CD8-positive, alpha-beta T cell (primary cell): ENCODE measurements at regions of chr1 and their contacts with region 1.

Region 1: DNA sequence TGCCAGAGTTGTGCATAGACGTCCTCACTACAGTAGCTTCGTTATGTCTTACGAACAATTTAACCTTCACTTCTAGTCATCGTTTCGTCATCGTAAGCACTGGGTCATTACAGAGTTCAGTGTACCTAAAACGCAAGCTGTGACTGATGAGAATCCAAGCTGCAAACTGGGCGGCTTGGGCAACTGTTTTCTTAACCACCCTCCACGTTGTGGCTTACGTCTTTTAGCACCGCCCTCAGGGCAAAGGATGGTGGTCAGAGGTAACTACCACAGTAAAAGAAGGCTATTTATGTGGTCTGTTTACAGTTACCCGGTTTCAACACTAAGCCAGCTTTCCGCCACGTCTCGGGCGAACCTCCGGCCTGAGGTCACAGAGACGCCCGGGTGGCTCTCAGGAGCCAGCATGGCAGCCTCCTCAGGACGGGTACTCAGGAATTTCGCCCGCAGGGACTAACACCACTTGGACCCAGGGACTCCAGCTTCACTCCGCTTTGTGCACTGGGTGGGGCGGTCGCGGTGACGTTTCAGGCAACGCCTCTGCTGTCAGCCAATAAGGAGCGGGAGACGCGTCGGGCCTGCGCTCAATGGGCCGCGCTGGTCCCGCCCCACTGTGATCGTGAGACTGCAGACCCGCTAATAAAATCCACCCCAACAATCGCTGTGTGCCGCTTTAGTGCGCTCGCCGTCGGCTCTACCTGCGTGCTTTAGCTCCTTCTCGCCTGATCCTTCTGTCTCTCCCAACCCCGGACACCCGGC is at the start of gene CTH:
- DNase-seq: peak; percentile 82 to 97 (median 91)
- ATAC-seq: peak; percentile 90
- H3K4me3 ChIP-seq: peak within 1 kb of the TSS; percentile 69 to 70
- H3K4me3 Mint-ChIP-seq: peak within 1 kb of the TSS; percentile 92
- H3K27ac ChIP-seq: peak within 1 kb of the TSS; percentile 87 to 88
- H3K27ac Mint-ChIP-seq: peak within 1 kb of the TSS; percentile 95
- H3K4me1 ChIP-seq: peaks cover 14% of the 10 kb centered on the region
- H3K4me1 Mint-ChIP-seq: peaks cover 30% of the 10 kb centered on the region
- H3K27me3 ChIP-seq: no peaks in the 10 kb centered on the region
- H3K27me3 Mint-ChIP-seq: peaks cover 5% of the 10 kb centered on the region
- CTCF ChIP-seq: no peak
- total RNA-seq, gene CTH: 15.5 to 19.1 TPM

Region 2: DNA sequence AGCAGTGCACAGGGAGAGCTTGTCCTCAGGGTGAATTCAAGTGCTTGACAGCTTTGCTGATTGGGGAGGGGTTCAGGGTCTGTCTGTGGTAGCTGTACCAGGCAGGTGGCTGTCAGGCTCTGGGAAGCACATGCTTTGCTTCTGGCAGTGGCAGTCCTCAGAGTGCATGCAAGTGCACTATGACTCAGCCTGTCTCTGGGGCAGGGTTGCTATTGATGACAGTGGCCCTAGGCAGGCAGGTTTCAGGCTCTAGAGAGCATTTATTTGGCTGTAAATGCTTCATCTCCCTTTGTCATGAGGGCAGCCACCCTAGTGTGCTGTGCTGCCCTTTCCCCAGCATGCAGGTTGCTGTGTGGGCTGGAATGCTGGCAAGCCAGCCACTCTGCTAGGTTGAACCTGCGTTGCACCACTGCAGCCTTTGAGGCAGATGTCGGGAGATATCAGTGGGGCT is 1094.9 kb before region 1 on chr1:
- CTCF ChIA-PET with region 1: no interaction called
- POLR2A ChIA-PET with region 1: no interaction called
- intact Hi-C with region 1: no loop called
- DNase-seq: no peak
- ATAC-seq: no peak
- H3K4me3 ChIP-seq: no peak overlapping the region
- H3K4me3 Mint-ChIP-seq: no peak overlapping the region
- H3K27ac ChIP-seq: no peak overlapping the region
- H3K27ac Mint-ChIP-seq: no peak overlapping the region
- H3K4me1 ChIP-seq: no peaks in the 10 kb centered on the region
- H3K4me1 Mint-ChIP-seq: no peaks in the 10 kb centered on the region
- H3K27me3 ChIP-seq: no peaks in the 10 kb centered on the region
- H3K27me3 Mint-ChIP-seq: no peaks in the 10 kb centered on the region
- CTCF ChIP-seq: no peak

Region 3: DNA sequence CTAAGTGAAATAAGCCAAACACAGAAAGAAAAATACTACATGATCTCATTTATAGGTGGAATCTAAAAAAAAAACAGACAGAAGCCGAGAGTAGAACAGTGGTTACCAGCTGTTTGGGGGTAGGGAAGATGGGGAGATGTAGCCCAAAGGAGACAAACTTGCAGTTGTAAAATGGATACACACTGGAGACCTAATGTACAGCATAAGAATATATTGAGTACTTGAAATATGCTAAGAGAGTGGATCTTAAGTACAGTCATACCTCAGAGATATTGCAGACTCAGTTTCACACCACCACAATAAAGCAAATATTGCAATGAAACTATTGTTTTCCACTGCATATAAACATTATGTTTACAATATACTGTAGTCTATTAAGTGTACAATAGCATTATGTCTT is 522.1 kb before region 1 on chr1:
- CTCF ChIA-PET with region 1: no interaction called
- POLR2A ChIA-PET with region 1: no interaction called
- intact Hi-C with region 1: no loop called
- DNase-seq: no peak
- ATAC-seq: no peak
- H3K4me3 ChIP-seq: no peak overlapping the region
- H3K4me3 Mint-ChIP-seq: no peak overlapping the region
- H3K27ac ChIP-seq: no peak overlapping the region
- H3K27ac Mint-ChIP-seq: no peak overlapping the region
- H3K4me1 ChIP-seq: no peaks in the 10 kb centered on the region
- H3K4me1 Mint-ChIP-seq: no peaks in the 10 kb centered on the region
- H3K27me3 ChIP-seq: no peaks in the 10 kb centered on the region
- H3K27me3 Mint-ChIP-seq: no peaks in the 10 kb centered on the region
- CTCF ChIP-seq: no peak

Region 4: GRCh38 chr1:70205434-70206118 is 205.2 kb before region 1 on chr1 and contains the start of gene LRRC40:
- CTCF ChIA-PET with region 1: no interaction called
- POLR2A ChIA-PET with region 1: interaction called, 4 read pairs
- intact Hi-C with region 1: loop called (anchors 2 to 5 kb)
- DNase-seq: peak; percentile 91 to 98 (median 96)
- ATAC-seq: peak; percentile 95
- H3K4me3 ChIP-seq: peak within 1 kb of the TSS; percentile 75 to 83
- H3K4me3 Mint-ChIP-seq: peak within 1 kb of the TSS; percentile 92
- H3K27ac ChIP-seq: peak within 1 kb of the TSS; percentile 88 to 97
- H3K27ac Mint-ChIP-seq: peak within 1 kb of the TSS; percentile 99
- H3K4me1 ChIP-seq: peaks cover 48% of the 10 kb centered on the region
- H3K4me1 Mint-ChIP-seq: peaks cover 76% of the 10 kb centered on the region
- H3K27me3 ChIP-seq: no peaks in the 10 kb centered on the region
- H3K27me3 Mint-ChIP-seq: no peaks in the 10 kb centered on the region
- CTCF ChIP-seq: no peak
- total RNA-seq, gene LRRC40: 13.7 to 15.4 TPM

Region 5: DNA sequence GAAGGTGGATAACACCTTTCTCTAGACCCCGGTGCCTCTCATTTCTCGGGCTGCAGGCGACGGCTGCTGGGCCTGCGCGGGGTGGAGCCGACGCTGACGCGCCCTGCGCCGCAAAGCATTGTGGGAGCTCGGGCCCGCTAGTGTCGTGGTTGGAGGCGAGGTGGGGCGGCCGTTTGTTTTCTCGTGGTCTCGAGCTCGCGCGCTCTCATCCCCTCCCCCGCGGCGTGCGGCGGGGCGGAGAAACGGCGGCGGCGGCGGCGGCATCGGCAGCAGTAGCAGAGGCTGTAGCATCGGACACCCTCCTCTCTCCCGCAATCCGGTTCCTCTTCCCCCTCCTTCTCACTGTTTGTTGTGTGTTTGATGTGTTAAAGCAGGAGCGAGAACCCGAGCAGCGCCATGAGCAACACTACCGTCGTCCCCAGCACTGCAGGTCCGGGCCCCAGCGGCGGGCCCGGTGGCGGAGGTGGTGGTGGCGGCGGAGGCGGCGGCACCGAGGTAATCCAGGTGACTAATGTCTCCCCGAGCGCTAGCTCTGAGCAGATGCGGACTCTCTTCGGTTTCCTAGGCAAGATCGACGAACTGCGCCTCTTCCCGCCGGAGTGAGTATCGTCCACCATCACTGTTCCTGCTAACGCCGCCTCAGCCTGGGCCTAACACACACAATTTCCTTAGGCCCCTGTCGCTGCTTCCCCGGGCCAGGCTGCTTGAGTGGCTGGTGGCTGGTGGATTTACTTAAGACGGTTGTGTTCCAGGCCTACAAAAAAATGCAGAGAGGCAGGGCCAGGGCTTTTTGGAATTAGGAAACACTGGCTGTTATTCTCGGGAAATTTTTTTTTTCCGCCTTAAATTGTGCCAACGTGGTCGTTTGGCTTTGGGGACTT is 189.3 kb before region 1 on chr1 and contains the start of gene SRSF11:
- CTCF ChIA-PET with region 1: no interaction called
- POLR2A ChIA-PET with region 1: interaction called, 19 read pairs
- intact Hi-C with region 1: loop called (anchors 1 to 5 kb)
- DNase-seq: peak; percentile 95 to 98 (median 98)
- ATAC-seq: peak; percentile 94
- H3K4me3 ChIP-seq: peak within 1 kb of the TSS; percentile 82 to 91
- H3K4me3 Mint-ChIP-seq: peak within 1 kb of the TSS; percentile 94
- H3K27ac ChIP-seq: peak within 1 kb of the TSS; percentile 96 to 97
- H3K27ac Mint-ChIP-seq: peak within 1 kb of the TSS; percentile 99
- H3K4me1 ChIP-seq: peaks cover 43% of the 10 kb centered on the region
- H3K4me1 Mint-ChIP-seq: peaks cover 48% of the 10 kb centered on the region
- H3K27me3 ChIP-seq: no peaks in the 10 kb centered on the region
- H3K27me3 Mint-ChIP-seq: no peaks in the 10 kb centered on the region
- CTCF ChIP-seq: no peak
- total RNA-seq, gene SRSF11: 427 to 456 TPM

Region 6: DNA sequence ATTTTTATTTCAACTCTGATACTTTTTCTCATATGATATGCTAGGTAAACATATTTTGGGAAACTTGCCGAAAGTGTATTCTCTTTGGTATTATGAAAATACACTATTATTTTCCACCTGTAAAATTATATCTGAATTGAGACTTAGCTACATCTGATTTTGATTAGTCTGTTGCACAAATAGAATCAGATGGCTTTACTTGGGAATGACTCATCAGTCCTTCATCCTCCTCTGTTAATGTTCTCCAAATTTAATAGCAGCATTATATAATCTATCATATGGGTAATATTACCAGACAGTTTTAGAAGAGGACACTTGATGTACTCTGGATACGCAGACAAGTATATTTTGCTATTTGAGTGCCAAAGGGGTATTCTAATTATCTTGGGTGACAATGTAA is 245.6 kb after region 1 on chr1:
- CTCF ChIA-PET with region 1: no interaction called
- POLR2A ChIA-PET with region 1: no interaction called
- intact Hi-C with region 1: no loop called
- DNase-seq: no peak
- ATAC-seq: no peak
- H3K4me3 ChIP-seq: no peak overlapping the region
- H3K4me3 Mint-ChIP-seq: no peak overlapping the region
- H3K27ac ChIP-seq: no peak overlapping the region
- H3K27ac Mint-ChIP-seq: no peak overlapping the region
- H3K4me1 ChIP-seq: no peaks in the 10 kb centered on the region
- H3K4me1 Mint-ChIP-seq: no peaks in the 10 kb centered on the region
- H3K27me3 ChIP-seq: no peaks in the 10 kb centered on the region
- H3K27me3 Mint-ChIP-seq: no peaks in the 10 kb centered on the region
- CTCF ChIP-seq: no peak

Region 7: GRCh38 chr1:71074681-71075080 is 663.9 kb after region 1 on chr1:
- CTCF ChIA-PET with region 1: no interaction called
- POLR2A ChIA-PET with region 1: no interaction called
- intact Hi-C with region 1: loop called in 1 of 2 experiments (anchors 10 kb)
- DNase-seq: no peak
- ATAC-seq: no peak
- H3K4me3 ChIP-seq: no peak overlapping the region
- H3K4me3 Mint-ChIP-seq: no peak overlapping the region
- H3K27ac ChIP-seq: no peak overlapping the region
- H3K27ac Mint-ChIP-seq: no peak overlapping the region
- H3K4me1 ChIP-seq: peaks cover 11% of the 10 kb centered on the region
- H3K4me1 Mint-ChIP-seq: peaks cover 49% of the 10 kb centered on the region
- H3K27me3 ChIP-seq: no peaks in the 10 kb centered on the region
- H3K27me3 Mint-ChIP-seq: no peaks in the 10 kb centered on the region
- CTCF ChIP-seq: no peak